ENCODE measurements at regions of chr15 and their contacts with region 1.

Region 1: GRCh38 chr15:74127260-74127953 is 3.0 kb upstream of the ISLR2 start:
- DNase-seq: peak; percentile 92
- ATAC-seq: peak; percentile 92
- H3K4me3 Mint-ChIP-seq: no peak overlapping the region
- H3K27ac Mint-ChIP-seq: no peak overlapping the region
- H3K4me1 Mint-ChIP-seq: peaks cover 17% of the 10 kb centered on the region
- H3K27me3 Mint-ChIP-seq: peaks cover 60% of the 10 kb centered on the region
- CTCF ChIP-seq: peak; percentile 93

Region 2: GRCh38 chr15:73991726-73992593 is 135.4 kb before region 1 on chr15 and contains the start of gene STOML1:
- CTCF ChIA-PET with region 1: no interaction called
- POLR2A ChIA-PET with region 1: no interaction called
- intact Hi-C with region 1: no loop called
- DNase-seq: peak; percentile 94
- ATAC-seq: peak; percentile 77
- H3K4me3 Mint-ChIP-seq: peak within 1 kb of the TSS; percentile 78
- H3K27ac Mint-ChIP-seq: peak within 1 kb of the TSS; percentile 83
- H3K4me1 Mint-ChIP-seq: peaks cover 33% of the 10 kb centered on the region
- H3K27me3 Mint-ChIP-seq: no peaks in the 10 kb centered on the region
- CTCF ChIP-seq: peak; percentile 95
- total RNA-seq, gene STOML1: 5.2 to 6.5 TPM

Region 3: DNA sequence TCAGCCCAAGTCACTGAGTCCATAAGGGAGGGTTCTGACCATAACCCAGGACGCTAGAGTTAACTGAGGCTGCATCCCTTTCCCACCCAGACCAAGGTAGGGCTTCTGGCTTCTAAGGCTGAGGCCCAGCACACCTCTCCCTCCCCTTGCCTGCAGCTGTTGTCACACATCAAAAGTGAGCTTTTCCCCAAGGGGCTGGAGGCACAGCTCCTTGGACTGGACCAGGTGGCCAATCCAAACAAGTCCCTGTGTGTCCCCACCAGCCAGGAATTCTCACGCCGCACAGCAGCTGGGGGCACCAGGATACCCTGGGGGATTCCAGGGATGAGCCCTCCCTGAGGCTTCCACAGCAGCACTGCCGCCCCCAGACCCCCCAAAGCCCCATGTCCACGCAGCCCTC is 19.3 kb before region 1 on chr15:
- CTCF ChIA-PET with region 1: no interaction called
- POLR2A ChIA-PET with region 1: no interaction called
- intact Hi-C with region 1: no loop called
- DNase-seq: no peak
- ATAC-seq: no peak
- H3K4me3 Mint-ChIP-seq: no peak overlapping the region
- H3K27ac Mint-ChIP-seq: no peak overlapping the region
- H3K4me1 Mint-ChIP-seq: no peaks in the 10 kb centered on the region
- H3K27me3 Mint-ChIP-seq: no peaks in the 10 kb centered on the region
- CTCF ChIP-seq: no peak

Region 4: GRCh38 chr15:74307827-74308644 is 180.6 kb after region 1 on chr15:
- CTCF ChIA-PET with region 1: interaction called, 17 read pairs
- POLR2A ChIA-PET with region 1: no interaction called
- intact Hi-C with region 1: loop called (anchors 10 kb)
- DNase-seq: peak; percentile 68
- ATAC-seq: peak; percentile 84
- H3K4me3 Mint-ChIP-seq: no peak overlapping the region
- H3K27ac Mint-ChIP-seq: no peak overlapping the region
- H3K4me1 Mint-ChIP-seq: no peaks in the 10 kb centered on the region
- H3K27me3 Mint-ChIP-seq: peaks cover 8% of the 10 kb centered on the region
- CTCF ChIP-seq: peak; percentile 56